Cardiac septum (tissue), 1 donor: ENCODE measurements at regions of chr11 and their contacts with region 1.

Region 1: DNA sequence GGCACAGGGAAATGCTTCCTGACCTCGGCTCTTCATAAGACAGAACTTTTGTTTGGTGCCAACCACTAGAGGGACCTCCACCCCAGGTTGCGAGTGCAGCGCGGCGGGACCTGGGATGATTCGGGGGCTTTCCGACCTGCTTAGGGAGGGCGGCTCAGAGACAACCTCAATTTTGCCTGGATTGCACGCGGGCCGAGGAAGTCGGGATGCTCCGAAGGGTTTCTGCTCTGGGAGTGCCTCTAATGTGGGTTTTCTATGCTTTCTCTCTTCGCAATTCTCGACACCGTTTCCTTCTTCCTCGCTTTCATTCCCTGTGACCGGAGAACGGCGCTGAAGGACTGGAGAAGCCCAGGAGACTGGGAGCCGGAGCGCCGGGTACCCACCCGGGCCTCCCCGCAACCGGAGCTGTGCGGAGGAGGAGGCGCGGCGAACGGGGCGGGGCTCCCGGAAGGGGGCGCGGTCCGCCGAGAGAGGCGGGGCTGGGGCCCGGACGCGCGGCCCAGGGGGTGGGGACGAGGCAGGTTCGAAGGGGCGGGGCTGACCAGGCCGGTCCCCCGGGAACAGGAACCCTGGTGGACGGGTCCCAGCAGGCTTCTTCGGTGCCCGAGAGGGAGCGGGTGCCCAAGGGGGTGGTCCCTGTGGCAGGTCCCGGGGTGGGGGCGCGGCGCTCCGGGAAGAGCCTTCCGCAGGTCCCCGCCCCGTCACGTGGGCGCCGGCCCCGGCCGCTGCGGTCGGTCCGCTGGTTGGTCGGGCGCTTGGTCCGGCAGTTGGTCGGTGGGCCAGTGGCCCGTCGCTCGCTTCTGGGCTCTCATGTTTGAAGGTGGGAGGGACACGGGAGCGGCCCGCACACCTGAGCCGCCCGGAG is at the start of gene PPFIBP2:
- DNase-seq: peak; percentile 95
- total RNA-seq, gene PPFIBP2: 14.9 TPM

Region 2: DNA sequence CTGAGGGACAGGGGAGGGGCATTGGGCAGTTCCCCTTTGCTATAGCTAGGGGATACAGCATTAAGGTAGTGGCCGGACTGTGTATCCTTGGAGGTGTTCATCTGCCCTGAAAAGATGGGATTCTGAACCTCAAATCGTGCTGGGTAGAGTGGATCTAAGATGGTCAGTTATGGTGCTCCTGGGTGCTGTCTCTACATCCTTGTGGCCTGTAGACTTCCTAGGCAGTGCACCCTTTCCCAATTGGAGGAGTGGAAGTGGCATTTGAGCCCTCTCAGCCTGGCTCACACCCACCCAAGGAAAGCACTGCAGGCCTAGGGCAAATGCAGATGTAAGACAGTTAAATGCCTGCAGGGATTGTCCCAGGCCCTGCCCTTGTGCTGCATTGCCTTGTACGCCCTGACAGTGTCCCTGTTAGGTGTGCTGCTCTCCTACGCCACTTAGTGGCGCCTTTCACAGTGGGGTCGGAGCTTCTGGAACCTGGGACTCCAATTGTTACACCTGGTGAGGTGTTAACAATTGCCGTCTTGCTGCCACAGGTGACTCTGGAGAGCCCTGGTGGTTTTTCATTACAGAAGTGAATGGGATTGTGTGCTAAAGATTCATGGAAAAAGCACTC is 35.3 kb after region 1 on chr11:
- intact Hi-C with region 1: loop called (anchors 5 kb)
- DNase-seq: no peak

Region 3: DNA sequence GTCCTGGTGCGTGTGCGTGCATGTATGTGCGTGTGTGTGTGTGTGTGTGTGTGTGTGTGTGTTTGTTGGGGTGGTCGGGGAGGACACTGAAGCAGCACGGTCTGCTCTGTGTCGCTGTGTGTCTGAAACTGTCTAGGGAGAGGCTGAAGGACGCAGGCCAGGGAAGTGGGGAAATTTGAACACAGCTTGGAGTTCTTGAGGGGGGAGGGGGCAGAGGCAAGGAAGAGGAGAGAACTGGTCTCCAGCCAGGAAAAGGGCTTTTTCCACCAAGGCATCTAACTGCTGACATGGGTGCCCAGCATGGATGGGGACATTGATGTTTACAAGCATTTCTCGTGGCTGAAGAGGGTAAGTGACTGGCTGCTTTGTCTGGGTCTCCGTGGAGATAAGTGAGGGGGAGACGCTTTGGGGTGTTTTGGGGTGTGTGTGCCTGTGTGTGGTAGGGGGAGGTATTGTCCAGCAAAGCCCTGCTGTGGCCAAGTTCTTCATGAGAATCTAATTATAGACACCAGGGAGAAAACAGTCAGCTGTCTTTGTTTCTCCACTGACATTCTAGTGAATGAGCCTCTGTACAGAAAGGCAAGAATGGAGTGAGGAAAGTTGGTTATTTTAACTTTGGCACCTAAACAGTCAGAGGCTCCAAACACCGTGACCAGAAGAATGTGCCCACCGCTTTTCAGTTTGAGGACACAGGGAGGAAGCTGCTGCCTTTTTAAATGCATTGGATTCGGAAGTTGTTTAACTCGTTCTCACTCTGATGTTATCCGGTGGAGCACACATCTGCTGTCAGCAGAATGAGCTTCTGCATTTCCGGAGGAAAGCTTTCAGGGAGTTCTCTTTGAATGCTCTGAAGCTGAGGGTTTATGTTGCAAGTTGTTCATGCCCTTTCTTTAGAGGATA is 64.1 kb after region 1 on chr11:
- intact Hi-C with region 1: loop called (anchors 2 kb)
- DNase-seq: no peak

Region 4: GRCh38 chr11:7657306-7658025 is 144.0 kb after region 1 on chr11:
- intact Hi-C with region 1: loop called (anchors 5 kb)
- DNase-seq: no peak